Naive thymus-derived CD4-positive, alpha-beta T cell (primary cell): ENCODE measurements at regions of chr16 and their contacts with region 1.

Region 1: GRCh38 chr16:48365581-48366164 is 19.5 kb downstream of the SIAH1 start:
- DNase-seq: peak; percentile 66 to 86 (median 73)
- ATAC-seq: peak; percentile 95
- H3K4me3 ChIP-seq: peak overlapping the region; percentile 88
- H3K4me3 Mint-ChIP-seq: peak overlapping the region; percentile 83 to 100 (median 94)
- H3K27ac ChIP-seq: peak overlapping the region; percentile 77
- H3K27ac Mint-ChIP-seq: peak overlapping the region; percentile 89 to 100 (median 98)
- H3K4me1 ChIP-seq: peaks cover 14 to 15% of the 10 kb centered on the region in 2 donors
- H3K4me1 Mint-ChIP-seq: peaks cover 24 to 71% (median 54%) of the 10 kb centered on the region in 7 donors
- H3K27me3 ChIP-seq: no peaks in the 10 kb centered on the region
- H3K27me3 Mint-ChIP-seq: no peaks in the 10 kb centered on the region

Region 2: DNA sequence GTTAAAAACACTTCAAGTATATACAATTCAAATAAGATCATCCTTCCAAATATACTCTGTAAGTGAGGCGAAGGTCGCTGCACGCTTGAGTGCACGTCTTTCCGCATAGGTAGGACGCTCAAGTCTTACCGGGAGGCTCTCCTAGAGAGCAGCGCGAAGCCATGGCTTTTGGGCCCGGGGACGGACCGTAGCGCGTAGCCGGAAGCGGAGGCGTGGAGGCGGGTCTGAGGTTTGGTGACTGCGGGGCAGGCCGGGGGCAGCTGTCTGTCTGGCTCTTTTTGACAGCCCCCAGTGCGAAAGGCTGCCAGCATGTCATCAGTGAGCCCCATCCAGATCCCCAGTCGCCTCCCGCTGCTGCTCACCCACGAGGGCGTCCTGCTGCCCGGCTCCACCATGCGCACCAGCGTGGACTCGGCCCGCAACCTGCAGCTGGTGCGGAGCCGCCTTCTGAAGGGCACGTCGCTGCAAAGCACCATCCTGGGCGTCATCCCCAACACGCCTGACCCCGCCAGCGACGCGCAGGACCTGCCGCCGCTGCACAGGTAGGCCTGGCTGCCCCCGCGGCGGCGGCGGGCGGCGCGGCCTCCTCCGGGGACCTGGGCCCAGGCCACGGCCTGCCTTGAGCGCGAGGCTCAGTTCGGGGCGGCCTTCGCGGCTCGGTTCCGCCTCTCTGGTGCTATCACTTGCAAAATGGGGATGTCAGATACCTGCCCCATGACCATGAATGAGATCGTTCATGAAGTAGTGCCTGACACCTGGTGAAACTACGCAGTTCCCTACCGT is 121.4 kb before region 1 on chr16 and contains the start of gene LONP2:
- CTCF ChIA-PET with region 1: no interaction called
- POLR2A ChIA-PET with region 1: no interaction called
- intact Hi-C with region 1: loop called (anchors 1 to 5 kb)
- DNase-seq: peak; percentile 79 to 97 (median 93)
- ATAC-seq: peak; percentile 99
- H3K4me3 ChIP-seq: peak within 1 kb of the TSS; percentile 78
- H3K4me3 Mint-ChIP-seq: peak within 1 kb of the TSS; percentile 93 to 100 (median 96)
- H3K27ac ChIP-seq: peak within 1 kb of the TSS; percentile 78
- H3K27ac Mint-ChIP-seq: peak within 1 kb of the TSS; percentile 89 to 98 (median 96)
- H3K4me1 ChIP-seq: peaks cover 25 to 27% of the 10 kb centered on the region in 2 donors
- H3K4me1 Mint-ChIP-seq: peaks cover 29 to 56% (median 45%) of the 10 kb centered on the region in 7 donors
- H3K27me3 ChIP-seq: no peaks in the 10 kb centered on the region
- H3K27me3 Mint-ChIP-seq: no peaks in the 10 kb centered on the region
- total RNA-seq, gene LONP2: 62.3 to 124 (median 83.0) TPM

Region 3: GRCh38 chr16:48318630-48319029 is 47.0 kb before region 1 on chr16:
- CTCF ChIA-PET with region 1: interaction called, 3 read pairs
- POLR2A ChIA-PET with region 1: interaction called, 3 read pairs
- intact Hi-C with region 1: loop called in 1 of 2 experiments (anchors 2 kb)
- DNase-seq: peak in 8 of 9 donors; percentile 25 to 83 (median 76)
- ATAC-seq: peak; percentile 92
- H3K4me3 ChIP-seq: peak overlapping the region; percentile 25
- H3K4me3 Mint-ChIP-seq: peak overlapping the region; percentile 62 to 88 (median 80)
- H3K27ac ChIP-seq: peak overlapping the region; percentile 9
- H3K27ac Mint-ChIP-seq: peak overlapping the region; percentile 58 to 88 (median 82)
- H3K4me1 ChIP-seq: peaks cover 20 to 35% of the 10 kb centered on the region in 2 donors
- H3K4me1 Mint-ChIP-seq: peaks cover 17 to 77% (median 62%) of the 10 kb centered on the region in 7 donors
- H3K27me3 ChIP-seq: no peaks in the 10 kb centered on the region
- H3K27me3 Mint-ChIP-seq: no peaks in the 10 kb centered on the region

Region 4: DNA sequence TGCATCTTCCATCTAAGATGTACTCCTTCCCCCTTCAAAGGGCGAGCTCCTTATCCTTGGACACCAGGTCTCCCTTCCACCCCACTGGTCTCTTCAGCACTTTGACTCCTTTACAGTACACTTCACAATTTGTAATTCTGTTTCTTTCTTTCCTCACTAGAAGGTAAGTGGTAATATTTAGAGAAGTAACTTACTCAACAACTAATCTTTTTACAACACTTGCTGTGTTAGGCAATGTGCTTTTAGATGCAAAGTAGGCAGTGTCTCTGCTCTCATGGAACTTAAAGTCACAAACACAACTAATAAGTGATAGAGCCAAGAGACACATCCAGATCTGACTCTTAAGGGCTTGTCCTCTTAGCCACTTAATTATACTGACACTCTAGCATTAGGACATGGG is 13.2 kb after region 1 on chr16:
- CTCF ChIA-PET with region 1: no interaction called
- POLR2A ChIA-PET with region 1: interaction called, 50 read pairs
- intact Hi-C with region 1: loop called in 1 of 2 experiments (anchors 1 kb)
- DNase-seq: no peak
- ATAC-seq: peak; percentile 60
- H3K4me3 ChIP-seq: no peak overlapping the region
- H3K4me3 Mint-ChIP-seq: peak overlapping the region in 9 of 10 donors; percentile 14 to 73 (median 41)
- H3K27ac ChIP-seq: no peak overlapping the region
- H3K27ac Mint-ChIP-seq: peak overlapping the region in 6 of 9 donors; percentile 7 to 80 (median 60)
- H3K4me1 ChIP-seq: peaks cover 8 to 27% of the 10 kb centered on the region in 2 donors
- H3K4me1 Mint-ChIP-seq: peaks cover 39 to 62% (median 56%) of the 10 kb centered on the region in 7 donors
- H3K27me3 ChIP-seq: no peaks in the 10 kb centered on the region
- H3K27me3 Mint-ChIP-seq: no peaks in the 10 kb centered on the region